Head of caudate nucleus (tissue), 42 donors: ENCODE measurements at regions of chr5 and their contacts with region 1.

Region 1: DNA sequence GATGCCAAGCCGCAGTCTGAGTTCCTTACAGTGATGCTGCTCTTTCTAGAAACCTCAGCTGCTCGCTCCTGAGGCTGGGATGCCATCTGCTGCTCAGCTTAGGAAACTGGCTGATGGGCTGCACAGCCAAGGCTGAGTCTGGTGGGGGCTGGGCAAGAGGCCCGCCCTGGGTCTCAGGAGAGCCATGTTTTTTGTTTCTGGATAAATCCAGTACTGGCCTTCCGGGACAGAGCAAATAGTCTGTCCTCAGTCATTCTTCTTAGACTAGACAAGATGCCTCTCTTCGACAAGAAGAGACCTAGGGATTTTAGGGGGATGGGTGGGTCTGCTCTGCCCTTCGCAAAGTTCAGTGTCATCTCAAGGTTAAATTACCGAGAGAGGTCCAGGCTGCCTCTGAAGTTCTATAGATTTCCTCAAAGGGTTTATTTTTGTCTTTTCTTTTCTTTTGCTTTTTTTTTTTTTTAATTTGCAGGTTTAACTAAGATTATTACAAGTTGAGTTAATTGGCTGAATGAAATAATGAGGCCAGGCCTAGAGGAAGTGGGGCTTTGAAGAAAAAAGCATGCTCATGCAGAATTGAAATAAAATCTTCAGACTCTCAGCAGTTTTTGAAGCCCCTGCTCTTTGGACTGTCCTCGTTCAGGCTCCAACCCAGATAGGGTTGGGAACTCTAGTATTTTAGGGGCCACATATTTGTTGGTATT is 30.6 kb upstream of the MATR3 start:
- DNase-seq: peak; percentile 78 to 97 (median 92)

Region 2: DNA sequence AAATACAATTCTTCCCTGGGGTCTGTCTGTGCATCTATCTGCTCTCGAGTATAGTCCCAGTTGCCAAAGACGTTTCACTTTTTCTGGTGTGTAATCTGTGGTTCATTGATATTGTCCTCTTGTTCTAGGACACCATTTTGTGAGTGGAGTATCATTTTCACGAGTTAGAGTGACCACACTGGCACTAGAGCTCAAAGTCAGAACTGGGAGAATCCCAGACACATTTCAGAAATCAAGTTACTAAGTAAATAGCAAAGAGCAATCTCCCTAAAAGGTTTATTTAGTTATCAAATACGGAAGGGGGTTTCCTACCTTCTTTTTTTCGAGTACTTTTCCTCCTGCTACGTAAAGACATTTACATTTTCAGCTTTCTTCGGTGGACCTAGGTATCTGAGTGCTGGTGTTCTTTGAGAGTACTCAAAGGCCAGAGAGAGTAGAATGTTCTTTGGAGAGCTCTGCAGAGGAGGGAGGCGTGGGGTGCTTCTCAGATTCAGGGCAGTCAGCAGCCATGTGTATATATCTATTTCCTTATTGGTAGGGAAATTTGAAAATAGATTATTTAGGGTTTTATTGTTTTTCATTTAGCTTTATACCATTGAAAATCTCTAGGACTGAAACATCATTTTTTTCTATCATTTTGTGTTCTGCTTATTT is 678.8 kb before region 1 on chr5:
- intact Hi-C with region 1: loop called (anchors 5 kb)
- DNase-seq: no peak

Region 3: GRCh38 chr5:138641547-138642298 is 621.2 kb before region 1 on chr5:
- intact Hi-C with region 1: loop called (anchors 10 kb)
- DNase-seq: peak; percentile 64 to 94 (median 84)

Region 4: DNA sequence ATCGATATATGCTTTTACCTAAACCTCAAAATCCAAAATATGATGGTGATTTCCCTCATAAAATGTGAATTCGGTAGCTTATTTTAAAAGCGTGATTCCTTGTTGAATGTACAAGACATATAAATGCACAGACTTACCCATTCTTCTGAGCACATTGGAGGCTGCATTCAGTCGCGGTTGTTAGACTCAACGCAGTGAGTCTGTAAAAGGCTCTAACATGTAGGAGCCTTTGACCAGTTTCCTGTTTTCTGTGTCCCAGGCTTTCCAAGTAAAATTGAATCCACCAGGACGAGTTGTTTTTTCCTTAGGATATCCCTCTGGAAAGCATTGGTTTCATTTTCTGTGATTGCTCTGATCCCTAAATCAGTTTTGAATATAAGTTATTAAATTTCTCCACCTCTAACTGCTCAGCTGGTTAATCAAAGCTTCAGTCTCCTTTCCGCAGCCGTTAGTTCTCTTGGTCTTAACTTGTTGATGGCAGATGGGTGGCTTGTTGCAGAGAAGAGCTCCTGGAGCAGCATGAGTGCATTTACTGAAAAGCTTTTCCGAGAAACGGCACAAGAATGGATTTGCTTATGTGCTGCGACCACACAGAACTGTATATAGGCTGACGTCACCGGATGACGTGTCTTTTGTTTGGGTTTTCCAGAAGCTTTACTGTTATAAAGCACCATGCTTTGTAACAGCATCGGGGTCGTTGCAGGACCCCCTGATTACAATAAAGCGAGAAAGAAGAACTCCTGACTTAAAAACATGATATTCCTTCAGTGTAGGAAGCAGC is 387.9 kb before region 1 on chr5 and contains the start of gene LRRTM2:
- intact Hi-C with region 1: loop called (anchors 10 kb)
- DNase-seq: peak; percentile 25 to 93 (median 76)

Region 5: GRCh38 chr5:138989720-138990119 is 273.2 kb before region 1 on chr5:
- intact Hi-C with region 1: no loop called
- DNase-seq: peak in 4 of 42 donors; percentile 6 to 28 (median 17)